ENCODE measurements at regions of chr2 and their contacts with region 1.

Region 1: GRCh38 chr2:176140513-176141317 is 10.6 kb upstream of the HOXD4 start:
- DNase-seq: peak; percentile 66 to 92
- H3K4me3 ChIP-seq: peak overlapping the region; percentile 35 to 67 (median 59)
- H3K27ac ChIP-seq: no peak overlapping the region
- H3K4me1 ChIP-seq: peaks cover 0 to 9% (median 4%) of the 10 kb centered on the region in 4 experiments; a peak in 5 of 7 replicates
- H3K27me3 ChIP-seq: peaks cover 81 to 100% (median 96%) of the 10 kb centered on the region in 4 experiments
- CTCF ChIP-seq: peak; percentile 84 to 96 (median 93)
- EP300 ChIP-seq: no peak
- POLR2A ChIP-seq: no peak
- RAD21 ChIP-seq: peak; percentile 96

Region 2: GRCh38 chr2:175864137-175864850 is 276.4 kb before region 1 on chr2:
- CTCF ChIA-PET with region 1: no interaction called
- POLR2A ChIA-PET with region 1: no interaction called
- DNase-seq: no peak
- H3K4me3 ChIP-seq: no peak overlapping the region
- H3K27ac ChIP-seq: no peak overlapping the region
- H3K4me1 ChIP-seq: no peaks in the 10 kb centered on the region
- H3K27me3 ChIP-seq: no peaks in the 10 kb centered on the region
- CTCF ChIP-seq: peak in 2 of 3 experiments; percentile 23 to 28; a peak in 3 of 4 replicates
- EP300 ChIP-seq: no peak
- POLR2A ChIP-seq: no peak
- RAD21 ChIP-seq: peak in 1 of 2 experiments; percentile 23; a peak in 1 of 4 replicates

Region 3: GRCh38 chr2:176085861-176086771 is 54.6 kb before region 1 on chr2:
- CTCF ChIA-PET with region 1: no interaction called
- POLR2A ChIA-PET with region 1: no interaction called
- DNase-seq: peak in 1 of 2 experiments; percentile 73
- H3K4me3 ChIP-seq: peak overlapping the region in 3 of 4 experiments; percentile 1 to 52 (median 14); a peak in 4 of 8 replicates
- H3K27ac ChIP-seq: no peak overlapping the region
- H3K4me1 ChIP-seq: peaks cover 0 to 19% (median 8%) of the 10 kb centered on the region in 4 experiments; a peak in 5 of 7 replicates
- H3K27me3 ChIP-seq: peaks cover 97 to 100% (median 100%) of the 10 kb centered on the region in 4 experiments
- CTCF ChIP-seq: peak in 2 of 3 experiments; percentile 54 to 64; a peak in 3 of 4 replicates
- EP300 ChIP-seq: no peak
- POLR2A ChIP-seq: no peak
- RAD21 ChIP-seq: peak; percentile 76 to 81

Region 4: GRCh38 chr2:176096986-176097819 is 43.5 kb before region 1 on chr2:
- CTCF ChIA-PET with region 1: interaction called, 11 read pairs
- POLR2A ChIA-PET with region 1: no interaction called
- DNase-seq: peak; percentile 86 to 91
- H3K4me3 ChIP-seq: peak overlapping the region; percentile 1 to 54 (median 22); a peak in 6 of 8 replicates
- H3K27ac ChIP-seq: no peak overlapping the region
- H3K4me1 ChIP-seq: peaks cover 0 to 28% (median 16%) of the 10 kb centered on the region in 4 experiments; a peak in 6 of 7 replicates
- H3K27me3 ChIP-seq: peaks cover 79 to 98% (median 91%) of the 10 kb centered on the region in 4 experiments
- CTCF ChIP-seq: peak in 2 of 3 experiments; percentile 89 to 90; a peak in 3 of 4 replicates
- EP300 ChIP-seq: no peak
- POLR2A ChIP-seq: no peak
- RAD21 ChIP-seq: peak; percentile 93 to 95

Region 5: GRCh38 chr2:176151442-176152369 is 11.0 kb after region 1 on chr2 and contains the start of gene HOXD4:
- CTCF ChIA-PET with region 1: interaction called, 36 read pairs
- POLR2A ChIA-PET with region 1: interaction called, 3 read pairs
- DNase-seq: peak in 1 of 2 experiments; percentile 60
- H3K4me3 ChIP-seq: peak within 1 kb of the TSS in 1 of 4 experiments; percentile 45; a peak in 2 of 8 replicates
- H3K27ac ChIP-seq: no peak within 1 kb of the TSS
- H3K4me1 ChIP-seq: peaks cover 0 to 10% (median 2%) of the 10 kb centered on the region in 4 experiments; a peak in 4 of 7 replicates
- H3K27me3 ChIP-seq: peaks cover 97 to 100% (median 100%) of the 10 kb centered on the region in 4 experiments
- CTCF ChIP-seq: no peak
- EP300 ChIP-seq: no peak
- POLR2A ChIP-seq: no peak
- RAD21 ChIP-seq: no peak
- total RNA-seq, gene HOXD4: not detected in 2 replicates

Region 6: DNA sequence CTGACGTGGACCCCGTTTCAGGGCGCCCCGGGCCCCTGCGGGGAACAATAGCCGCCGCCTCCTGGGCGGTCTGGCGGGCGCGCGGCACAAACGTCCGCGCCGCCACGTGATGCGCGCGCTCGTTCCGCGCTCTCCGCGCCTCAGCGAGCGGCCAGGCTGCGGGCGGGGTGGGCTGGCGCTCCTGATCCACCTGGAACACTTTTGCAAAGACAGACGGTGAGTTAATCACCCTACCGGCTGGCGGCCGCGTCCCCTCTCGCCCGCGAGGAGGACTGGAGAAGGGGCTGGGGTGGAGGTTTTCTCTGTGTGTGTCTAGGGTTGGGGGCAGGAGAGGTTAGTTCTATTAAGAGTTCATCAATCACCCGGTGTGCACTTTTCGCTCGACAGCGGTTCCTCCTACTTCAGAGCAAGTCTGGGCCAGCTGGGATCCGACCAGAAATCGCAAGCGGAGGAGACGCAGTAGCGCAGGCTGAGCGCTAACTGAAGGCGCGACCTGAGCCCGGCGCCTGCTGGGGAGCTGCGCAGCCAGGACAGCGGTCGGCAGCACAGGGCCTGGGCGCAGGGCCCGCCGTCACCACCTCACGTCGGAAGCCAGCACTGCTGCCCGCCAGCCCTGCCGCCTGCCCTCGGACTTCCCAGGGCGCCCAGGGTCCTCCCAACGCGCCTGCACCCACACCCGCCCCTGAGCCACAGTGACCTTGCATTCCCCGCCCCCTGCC is 37.5 kb after region 1 on chr2:
- CTCF ChIA-PET with region 1: interaction called, 28 read pairs
- POLR2A ChIA-PET with region 1: no interaction called
- DNase-seq: peak in 1 of 2 experiments; percentile 74
- H3K4me3 ChIP-seq: peak overlapping the region; percentile 24 to 56 (median 34); a peak in 6 of 8 replicates
- H3K27ac ChIP-seq: no peak overlapping the region
- H3K4me1 ChIP-seq: peaks cover 3 to 17% (median 7%) of the 10 kb centered on the region in 4 experiments
- H3K27me3 ChIP-seq: peaks cover 92 to 99% (median 97%) of the 10 kb centered on the region in 4 experiments
- CTCF ChIP-seq: no peak
- EP300 ChIP-seq: no peak
- POLR2A ChIP-seq: no peak
- RAD21 ChIP-seq: 0 out of 4 replicates have a peak, but pooled peaks of 1 of the 2 experiments have one; percentile 4

Region 7: DNA sequence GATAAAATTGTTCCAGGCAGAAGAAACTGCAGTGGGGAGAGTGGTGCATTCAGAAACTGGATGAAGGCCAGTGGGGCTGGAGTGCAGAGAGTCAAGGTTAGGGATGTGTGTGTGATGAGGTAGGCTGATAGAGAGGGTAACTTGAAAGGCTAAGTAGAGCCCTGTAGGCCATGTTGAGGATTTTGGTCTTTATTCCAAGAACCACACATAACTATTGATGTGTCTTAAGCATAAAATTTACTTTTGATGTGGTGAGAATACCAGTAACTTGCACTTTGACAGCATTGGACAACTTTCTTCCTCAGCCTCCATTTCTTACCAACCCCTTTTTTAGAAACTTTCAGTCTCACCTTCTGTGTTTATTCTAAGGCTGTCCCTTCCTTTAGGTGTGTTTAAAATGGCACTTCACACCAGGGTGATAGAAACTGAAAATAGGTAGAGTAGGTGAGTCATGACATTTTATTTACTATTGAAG is 151.1 kb after region 1 on chr2:
- CTCF ChIA-PET with region 1: no interaction called
- POLR2A ChIA-PET with region 1: no interaction called
- DNase-seq: no peak
- H3K4me3 ChIP-seq: no peak overlapping the region
- H3K27ac ChIP-seq: no peak overlapping the region
- H3K4me1 ChIP-seq: no peaks in the 10 kb centered on the region
- H3K27me3 ChIP-seq: no peaks in the 10 kb centered on the region
- CTCF ChIP-seq: no peak
- EP300 ChIP-seq: no peak
- POLR2A ChIP-seq: no peak
- RAD21 ChIP-seq: no peak

Region 8: DNA sequence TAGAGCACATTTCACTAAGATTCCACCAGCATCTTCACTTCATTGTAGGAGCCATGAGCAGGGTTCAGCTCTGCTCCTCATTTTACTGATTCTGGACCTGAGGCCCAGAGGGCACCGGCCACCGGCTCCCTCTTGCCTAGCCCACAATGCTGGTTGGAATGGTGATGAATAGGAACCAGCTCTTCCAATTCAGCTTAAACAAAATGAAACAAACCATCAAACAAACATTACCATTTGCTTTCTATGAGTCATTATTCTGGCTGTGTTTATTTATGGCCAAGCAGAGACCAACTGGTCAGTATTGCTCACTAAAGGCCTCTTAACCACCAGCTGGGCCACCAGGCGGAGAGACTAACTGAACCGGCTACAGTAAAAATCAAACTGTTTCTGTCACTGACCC is 305.2 kb after region 1 on chr2:
- CTCF ChIA-PET with region 1: interaction called, 27 read pairs
- POLR2A ChIA-PET with region 1: no interaction called
- DNase-seq: no peak
- H3K4me3 ChIP-seq: no peak overlapping the region
- H3K27ac ChIP-seq: no peak overlapping the region
- H3K4me1 ChIP-seq: peaks cover 0 to 18% (median 11%) of the 10 kb centered on the region in 4 experiments; a peak in 6 of 7 replicates
- H3K27me3 ChIP-seq: peaks cover 0 to 3% (median 0%) of the 10 kb centered on the region in 4 experiments; a peak in 1 of 7 replicates
- CTCF ChIP-seq: no peak
- EP300 ChIP-seq: no peak
- POLR2A ChIP-seq: no peak
- RAD21 ChIP-seq: no peak

Region 9: GRCh38 chr2:176562359-176563043 is 421.8 kb after region 1 on chr2:
- CTCF ChIA-PET with region 1: interaction called, 15 read pairs
- POLR2A ChIA-PET with region 1: no interaction called
- DNase-seq: no peak
- H3K4me3 ChIP-seq: no peak overlapping the region
- H3K27ac ChIP-seq: no peak overlapping the region
- H3K4me1 ChIP-seq: no peaks in the 10 kb centered on the region; a peak in 1 of 7 replicates
- H3K27me3 ChIP-seq: no peaks in the 10 kb centered on the region
- CTCF ChIP-seq: no peak
- EP300 ChIP-seq: no peak
- POLR2A ChIP-seq: no peak
- RAD21 ChIP-seq: no peak

Region 10: DNA sequence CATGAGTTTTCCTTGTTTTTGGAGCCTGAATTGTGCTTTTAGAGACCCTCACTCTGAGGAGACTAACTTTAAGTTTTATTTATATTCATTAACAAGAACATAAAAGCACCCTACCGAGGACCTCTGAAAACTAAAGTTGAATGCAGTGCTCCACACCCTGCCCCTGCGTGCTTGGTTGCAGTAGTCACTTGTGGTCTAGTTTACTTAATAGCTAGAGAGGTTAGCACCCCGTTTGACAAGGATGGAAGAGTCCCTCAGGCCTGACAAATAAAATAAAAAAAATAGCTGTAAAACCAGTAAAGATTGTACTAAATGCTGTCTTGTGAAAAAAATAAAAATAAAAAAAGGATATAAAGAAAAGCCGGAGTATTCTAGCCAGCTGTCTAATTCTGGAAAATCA is 523.8 kb after region 1 on chr2:
- CTCF ChIA-PET with region 1: interaction called, 17 read pairs
- POLR2A ChIA-PET with region 1: no interaction called
- DNase-seq: no peak
- H3K4me3 ChIP-seq: no peak overlapping the region
- H3K27ac ChIP-seq: no peak overlapping the region
- H3K4me1 ChIP-seq: peaks cover 0 to 3% (median under 1%) of the 10 kb centered on the region in 4 experiments; a peak in 1 of 7 replicates
- H3K27me3 ChIP-seq: peaks cover 5 to 19% (median 17%) of the 10 kb centered on the region in 4 experiments; a peak in 6 of 7 replicates
- CTCF ChIP-seq: no peak
- EP300 ChIP-seq: no peak
- POLR2A ChIP-seq: no peak
- RAD21 ChIP-seq: no peak

Measured in H1 (cell line).